Calu3 (cell line): ENCODE measurements at regions of chrX and their contacts with region 1.

Region 1: DNA sequence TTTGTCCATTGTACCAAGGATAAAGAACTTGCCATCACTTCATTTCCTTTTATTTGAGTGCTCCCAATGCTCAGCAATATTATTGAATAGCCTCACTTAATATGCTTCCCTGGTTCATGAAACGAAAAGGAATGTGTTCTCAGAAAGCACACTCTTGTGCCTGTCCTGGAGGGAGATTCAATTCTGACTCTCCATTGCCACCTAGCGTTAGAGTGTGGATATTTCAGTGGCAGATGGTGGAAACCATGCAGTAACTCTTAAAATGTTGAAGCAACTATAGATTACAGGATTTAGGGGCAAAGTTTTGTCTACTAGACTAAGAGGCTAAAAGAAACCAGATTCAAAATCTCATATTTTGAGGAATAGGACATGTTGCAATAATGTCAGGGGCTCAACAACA is 36.0 kb downstream of the GAB3 start:
- DNase-seq: peak; percentile 51
- H3K4me3 Mint-ChIP-seq: no peak overlapping the region
- H3K27ac Mint-ChIP-seq: no peak overlapping the region
- H3K4me1 Mint-ChIP-seq: peaks cover 16% of the 10 kb centered on the region
- H3K27me3 Mint-ChIP-seq: peaks cover 71% of the 10 kb centered on the region
- CTCF ChIP-seq: peak; percentile 51

Region 2: GRCh38 chrX:154840856-154841255 is 125.9 kb after region 1 on chrX:
- CTCF ChIA-PET with region 1: interaction called, 4 read pairs
- intact Hi-C with region 1: loop called (anchors 5 kb)
- DNase-seq: peak; percentile 3
- H3K4me3 Mint-ChIP-seq: no peak overlapping the region
- H3K27ac Mint-ChIP-seq: no peak overlapping the region
- H3K4me1 Mint-ChIP-seq: no peaks in the 10 kb centered on the region
- H3K27me3 Mint-ChIP-seq: peaks cover 47% of the 10 kb centered on the region
- CTCF ChIP-seq: peak; percentile 24